T-cell (primary cell): ENCODE measurements at regions of chr1 and their contacts with region 1.

Region 1: GRCh38 chr1:160085686-160086455 is 4.5 kb downstream of the KCNJ9 start:
- DNase-seq: peak; percentile 46 to 87 (median 71)
- ATAC-seq: peak; percentile 51 to 71 (median 62)
- H3K4me3 ChIP-seq: no peak overlapping the region
- H3K4me3 Mint-ChIP-seq: peak overlapping the region in 1 of 3 donors; percentile 24
- H3K27ac ChIP-seq: no peak overlapping the region
- H3K27ac Mint-ChIP-seq: peak overlapping the region in 1 of 2 donors; percentile 48
- H3K4me1 ChIP-seq: peaks cover 0 to 16% of the 10 kb centered on the region in 2 experiments
- H3K4me1 Mint-ChIP-seq: peaks cover 14 to 22% (median 19%) of the 10 kb centered on the region in 3 donors
- H3K27me3 ChIP-seq: peaks cover 6 to 29% of the 10 kb centered on the region in 2 experiments
- H3K27me3 Mint-ChIP-seq: peaks cover 8 to 20% of the 10 kb centered on the region in 2 donors

Region 2: GRCh38 chr1:161843156-161843555 is 1757.3 kb after region 1 on chr1:
- CTCF ChIA-PET with region 1: interaction called in 1 of 2 experiments, 10 read pairs
- POLR2A ChIA-PET with region 1: no interaction called
- DNase-seq: no peak
- ATAC-seq: no peak
- H3K4me3 ChIP-seq: no peak overlapping the region
- H3K4me3 Mint-ChIP-seq: no peak overlapping the region
- H3K27ac ChIP-seq: no peak overlapping the region
- H3K27ac Mint-ChIP-seq: no peak overlapping the region
- H3K4me1 ChIP-seq: no peaks in the 10 kb centered on the region
- H3K4me1 Mint-ChIP-seq: peaks cover 0 to 10% (median 2%) of the 10 kb centered on the region in 3 donors
- H3K27me3 ChIP-seq: no peaks in the 10 kb centered on the region
- H3K27me3 Mint-ChIP-seq: no peaks in the 10 kb centered on the region